Activated naive CD8-positive, alpha-beta T cell treated with anti-CD3 and anti-CD28 coated beads, Interleukin-2, amount 10 ng/mL, durations not matched to agents 7 days and 5 days (primary cell): ENCODE measurements at regions of chr2 and their contacts with region 1.

Region 1: GRCh38 chr2:8514796-8515758 is 166.8 kb upstream of the ID2 start:
- DNase-seq: peak; percentile 64
- ATAC-seq: peak; percentile 92
- H3K4me3 Mint-ChIP-seq: peak overlapping the region; percentile 69
- H3K27ac Mint-ChIP-seq: peak overlapping the region; percentile 87
- H3K4me1 Mint-ChIP-seq: peaks cover 69% of the 10 kb centered on the region
- H3K27me3 Mint-ChIP-seq: no peaks in the 10 kb centered on the region

Region 2: GRCh38 chr2:8477552-8478470 is 37.3 kb before region 1 on chr2:
- POLR2A ChIA-PET with region 1: interaction called, 17 read pairs
- DNase-seq: no peak
- ATAC-seq: peak; percentile 25
- H3K4me3 Mint-ChIP-seq: peak overlapping the region; percentile 60
- H3K27ac Mint-ChIP-seq: peak overlapping the region; percentile 88
- H3K4me1 Mint-ChIP-seq: peaks cover 89% of the 10 kb centered on the region
- H3K27me3 Mint-ChIP-seq: no peaks in the 10 kb centered on the region